Endothelial cell of umbilical vein (primary cell): ENCODE measurements at regions of chr15 and their contacts with region 1.

Region 1: DNA sequence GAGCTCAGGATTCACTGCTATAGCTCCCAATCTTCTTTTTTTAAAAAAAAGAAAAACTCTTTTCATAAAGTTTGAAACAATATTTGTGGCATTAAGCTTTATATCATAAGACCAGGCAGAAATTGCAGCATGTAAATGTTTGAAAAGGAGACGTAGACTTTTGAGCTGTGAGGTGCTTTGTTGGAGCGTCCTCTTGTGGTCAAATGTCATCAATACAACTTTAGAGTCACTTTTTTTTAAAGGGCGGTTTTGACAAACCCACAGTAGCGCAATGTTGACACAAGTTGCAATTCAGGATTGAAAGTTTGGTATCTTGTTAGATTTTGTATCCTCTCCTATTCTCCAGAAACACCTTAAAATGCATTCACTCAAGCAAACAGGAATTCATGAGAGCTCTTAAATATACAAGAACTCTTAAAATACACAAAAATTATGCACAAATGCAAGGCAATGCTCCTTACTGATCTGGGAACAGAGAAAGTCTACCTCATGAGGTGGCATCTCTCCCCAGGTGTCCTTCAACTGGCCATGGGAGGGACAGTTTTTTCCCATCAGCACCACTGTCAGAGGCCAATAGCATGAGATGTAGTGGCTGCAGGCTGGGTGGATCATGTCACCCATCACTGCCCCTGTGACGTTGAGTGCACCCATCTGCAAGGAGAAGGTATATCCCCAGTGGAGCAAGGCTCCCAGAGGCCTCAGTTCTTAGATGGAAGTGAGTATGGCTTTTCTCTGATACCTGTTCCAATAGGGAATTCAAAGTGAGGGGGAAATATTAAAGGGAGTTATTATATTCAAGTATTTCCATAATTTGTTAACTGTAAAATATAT is 70.7 kb downstream of the ANXA2 start:
- DNase-seq: peak; percentile 74
- H3K4me3 ChIP-seq: no peak overlapping the region
- H3K27ac ChIP-seq: no peak overlapping the region
- H3K4me1 ChIP-seq: no peaks in the 10 kb centered on the region
- H3K27me3 ChIP-seq: peaks cover 30 to 54% of the 10 kb centered on the region in 2 experiments
- CTCF ChIP-seq: peak; percentile 64 to 75
- POLR2A ChIP-seq: no peak

Region 2: DNA sequence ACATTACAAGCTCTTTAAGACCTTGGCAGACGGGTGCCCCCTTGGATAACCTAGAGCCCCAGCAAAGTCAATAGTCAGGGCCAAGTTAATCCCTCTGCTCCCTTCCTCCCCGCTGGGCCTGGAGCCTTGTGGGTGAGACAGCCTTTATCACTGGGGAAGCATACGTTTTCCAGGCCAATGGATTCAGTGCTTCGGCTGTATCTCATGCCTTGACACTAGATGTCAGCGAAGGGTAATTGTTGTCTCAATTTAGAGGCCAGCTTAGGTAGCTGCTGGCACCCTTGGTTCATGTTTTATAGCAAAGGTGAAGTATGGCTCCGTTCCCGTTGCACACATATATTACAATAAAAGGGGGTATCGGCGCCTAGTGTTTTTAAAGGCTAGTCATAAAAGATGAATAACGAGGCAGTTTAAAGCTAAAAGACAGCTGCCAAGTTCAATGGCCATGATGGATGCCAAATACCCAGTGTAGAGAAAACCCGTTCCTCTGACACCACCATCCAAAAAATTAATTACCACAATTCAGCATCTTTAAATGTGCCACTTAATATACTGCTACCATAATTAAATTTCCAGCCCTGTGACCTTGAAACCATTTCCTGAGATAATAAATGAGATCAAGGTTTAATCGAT is 585.6 kb before region 1 on chr15:
- CTCF ChIA-PET with region 1: interaction called, 20 read pairs
- POLR2A ChIA-PET with region 1: no interaction called
- dilution Hi-C with region 1: no loop called
- intact Hi-C with region 1: no loop called
- DNase-seq: no peak
- H3K4me3 ChIP-seq: no peak overlapping the region
- H3K27ac ChIP-seq: no peak overlapping the region
- H3K4me1 ChIP-seq: no peaks in the 10 kb centered on the region
- H3K27me3 ChIP-seq: peaks cover 0 to 5% of the 10 kb centered on the region in 2 experiments
- CTCF ChIP-seq: peak in 1 of 2 donors; percentile 2
- POLR2A ChIP-seq: no peak

Region 3: GRCh38 chr15:59997070-59997701 is 329.9 kb before region 1 on chr15:
- CTCF ChIA-PET with region 1: interaction called, 3 read pairs
- POLR2A ChIA-PET with region 1: no interaction called
- dilution Hi-C with region 1: no loop called
- intact Hi-C with region 1: loop called (anchors 10 kb)
- DNase-seq: no peak
- H3K4me3 ChIP-seq: no peak overlapping the region
- H3K27ac ChIP-seq: no peak overlapping the region
- H3K4me1 ChIP-seq: no peaks in the 10 kb centered on the region
- H3K27me3 ChIP-seq: peaks cover 95 to 99% of the 10 kb centered on the region in 2 experiments
- CTCF ChIP-seq: no peak
- POLR2A ChIP-seq: no peak

Region 4: DNA sequence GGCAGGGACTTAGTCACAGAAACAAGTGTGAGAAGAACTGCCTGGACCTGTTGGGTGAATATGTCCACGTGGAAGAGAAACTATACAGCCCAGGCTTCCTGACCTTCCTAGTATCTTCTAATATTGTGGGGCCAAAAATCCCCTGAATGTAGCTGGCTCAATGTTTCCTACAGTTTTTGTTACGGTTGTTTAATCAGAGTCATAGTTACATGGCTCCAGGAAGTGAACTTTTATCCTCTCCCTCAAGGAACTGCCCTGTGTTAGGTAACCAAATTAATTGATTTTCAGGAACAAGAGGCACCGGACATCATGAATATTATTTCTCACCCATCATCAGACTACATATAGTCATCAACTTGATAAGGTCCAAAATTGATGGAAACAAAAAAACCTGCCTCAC is 11.8 kb after region 1 on chr15:
- CTCF ChIA-PET with region 1: interaction called, 13 read pairs
- POLR2A ChIA-PET with region 1: no interaction called
- dilution Hi-C with region 1: no loop called
- intact Hi-C with region 1: no loop called
- DNase-seq: no peak
- H3K4me3 ChIP-seq: no peak overlapping the region
- H3K27ac ChIP-seq: no peak overlapping the region
- H3K4me1 ChIP-seq: no peaks in the 10 kb centered on the region
- H3K27me3 ChIP-seq: peaks cover 0 to 4% of the 10 kb centered on the region in 2 experiments
- CTCF ChIP-seq: no peak
- POLR2A ChIP-seq: no peak